ENCODE measurements at regions of chr10 and their contacts with region 1.

Region 1: DNA sequence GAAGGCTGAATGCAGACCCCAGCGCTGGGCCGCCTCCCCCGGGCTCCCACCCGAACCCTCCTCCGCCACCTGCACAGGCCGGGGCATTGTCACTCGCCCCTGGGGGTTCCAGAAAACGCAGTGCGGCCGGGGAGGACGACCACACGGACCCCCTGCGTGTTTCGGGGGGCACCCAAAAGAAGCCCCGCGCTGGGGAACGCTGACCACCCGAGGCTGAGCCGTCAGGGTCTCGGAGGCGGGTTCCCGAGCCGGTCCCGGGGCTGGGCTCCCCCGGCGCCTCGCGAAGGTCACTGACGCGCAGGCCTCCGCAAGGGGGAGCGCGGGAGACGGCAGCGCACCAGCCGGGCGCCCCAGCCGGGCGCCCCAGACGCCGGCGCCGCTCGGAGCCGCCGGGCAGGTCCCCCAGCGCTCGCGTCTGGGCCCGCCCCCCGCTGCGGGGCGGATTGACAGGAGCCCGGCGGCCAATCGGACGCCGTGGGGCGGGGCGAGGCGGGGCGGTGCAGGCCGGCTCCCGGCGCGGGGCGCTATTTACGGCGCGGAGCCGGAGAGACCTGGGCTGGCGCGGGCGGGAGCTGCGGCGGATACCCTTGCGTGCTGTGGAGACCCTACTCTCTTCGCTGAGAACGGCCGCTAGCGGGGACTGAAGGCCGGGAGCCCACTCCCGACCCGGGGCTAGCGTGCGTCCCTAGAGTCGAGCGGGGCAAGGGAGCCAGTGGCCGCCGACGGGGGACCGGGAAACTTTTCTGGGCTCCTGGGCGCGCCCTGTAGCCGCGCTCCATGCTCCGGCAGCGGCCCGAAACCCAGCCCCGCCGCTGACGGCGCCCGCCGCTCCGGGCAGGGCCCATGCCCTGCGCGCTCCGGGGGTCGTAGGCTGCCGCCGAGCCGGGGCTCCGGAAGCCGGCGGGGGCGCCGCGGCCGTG is at the start of gene BAMBI:
- DNase-seq: peak; percentile 91
- H3K4me3 Mint-ChIP-seq: peak within 1 kb of the TSS; percentile 71
- H3K27ac Mint-ChIP-seq: no peak within 1 kb of the TSS
- H3K4me1 Mint-ChIP-seq: peaks cover 26% of the 10 kb centered on the region
- H3K27me3 Mint-ChIP-seq: peaks cover 48% of the 10 kb centered on the region
- total RNA-seq, gene BAMBI: 0.31 to 0.33 TPM

Region 2: GRCh38 chr10:28479425-28479865 is 197.8 kb before region 1 on chr10:
- CTCF ChIA-PET with region 1: no interaction called
- POLR2A ChIA-PET with region 1: no interaction called
- intact Hi-C with region 1: no loop called
- DNase-seq: no peak
- H3K4me3 Mint-ChIP-seq: no peak overlapping the region
- H3K27ac Mint-ChIP-seq: no peak overlapping the region
- H3K4me1 Mint-ChIP-seq: no peaks in the 10 kb centered on the region
- H3K27me3 Mint-ChIP-seq: peaks cover 8% of the 10 kb centered on the region

Region 3: GRCh38 chr10:28991326-28992270 is 314.4 kb after region 1 on chr10:
- CTCF ChIA-PET with region 1: interaction called, 3 read pairs
- POLR2A ChIA-PET with region 1: no interaction called
- intact Hi-C with region 1: loop called (anchors 5 kb)
- DNase-seq: peak; percentile 50
- H3K4me3 Mint-ChIP-seq: no peak overlapping the region
- H3K27ac Mint-ChIP-seq: no peak overlapping the region
- H3K4me1 Mint-ChIP-seq: peaks cover 4% of the 10 kb centered on the region
- H3K27me3 Mint-ChIP-seq: peaks cover 1% of the 10 kb centered on the region

Measured in activated CD4-positive, alpha-beta memory T cell treated with anti-CD3 and anti-CD28 coated beads for 36 hours (primary cell).